Breast epithelium (tissue), 4 donors: ENCODE measurements at regions of chr4 and their contacts with region 1.

Region 1: GRCh38 chr4:152369902-152370295 is 166.0 kb downstream of the FBXW7 start:
- DNase-seq: no peak
- H3K4me3 ChIP-seq: no peak overlapping the region
- H3K27ac ChIP-seq: no peak overlapping the region
- H3K4me1 ChIP-seq: no peaks in the 10 kb centered on the region
- H3K27me3 ChIP-seq: no peaks in the 10 kb centered on the region
- CTCF ChIP-seq: no peak
- POLR2A ChIP-seq: no peak

Region 2: DNA sequence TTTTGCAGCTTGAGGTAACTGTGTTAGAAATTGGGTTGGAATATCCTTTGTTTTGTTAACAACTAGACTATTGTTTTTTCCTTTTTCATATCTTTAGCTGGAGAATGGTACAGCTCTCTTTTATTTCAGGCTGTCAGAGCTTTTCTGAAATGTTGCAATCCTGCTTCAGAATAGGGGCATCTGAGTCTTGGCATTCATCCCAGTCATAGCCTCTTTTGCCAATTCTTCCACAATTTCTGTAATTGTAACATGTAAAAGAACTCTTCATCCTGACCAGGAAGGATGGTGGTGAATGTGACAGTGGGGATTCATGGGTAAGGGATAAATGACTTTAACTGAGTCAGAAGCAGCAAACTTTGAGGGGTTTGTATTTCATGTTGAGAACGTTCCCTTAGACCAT is 832.2 kb before region 1 on chr4:
- intact Hi-C with region 1: loop called (anchors 5 kb)
- DNase-seq: no peak
- H3K4me3 ChIP-seq: no peak overlapping the region
- H3K27ac ChIP-seq: no peak overlapping the region
- H3K4me1 ChIP-seq: peaks cover 0 to 7% of the 10 kb centered on the region in 2 donors
- H3K27me3 ChIP-seq: no peaks in the 10 kb centered on the region
- CTCF ChIP-seq: no peak
- POLR2A ChIP-seq: no peak